B cell (primary cell): ENCODE measurements at regions of chr7 and their contacts with region 1.

Region 1: GRCh38 chr7:876167-876967 is at the start of gene GET4:
- DNase-seq: peak; percentile 98
- ATAC-seq: peak; percentile 78
- H3K4me3 ChIP-seq: peak within 1 kb of the TSS in 4 of 5 experiments; percentile 71 to 97 (median 88)
- H3K4me3 Mint-ChIP-seq: peak within 1 kb of the TSS; percentile 83
- H3K27ac ChIP-seq: peak within 1 kb of the TSS; percentile 80 to 93
- H3K27ac Mint-ChIP-seq: peak within 1 kb of the TSS; percentile 90
- H3K4me1 ChIP-seq: peaks cover 21 to 35% of the 10 kb centered on the region in 2 donors
- H3K4me1 Mint-ChIP-seq: peaks cover 36% of the 10 kb centered on the region
- H3K27me3 ChIP-seq: no peaks in the 10 kb centered on the region
- H3K27me3 Mint-ChIP-seq: no peaks in the 10 kb centered on the region
- CTCF ChIP-seq: no peak
- total RNA-seq, gene GET4: 62.8 and 65.5 TPM in 2 replicates

Region 2: GRCh38 chr7:726084-726853 is 150.1 kb before region 1 on chr7 and contains the start of gene DNAAF5:
- CTCF ChIA-PET with region 1: no interaction called
- POLR2A ChIA-PET with region 1: no interaction called
- intact Hi-C with region 1: loop called (anchors 1 kb)
- DNase-seq: peak; percentile 91
- ATAC-seq: peak; percentile 89
- H3K4me3 ChIP-seq: peak within 1 kb of the TSS; percentile 35 to 87 (median 66)
- H3K4me3 Mint-ChIP-seq: peak within 1 kb of the TSS; percentile 86
- H3K27ac ChIP-seq: peak within 1 kb of the TSS; percentile 29 to 76
- H3K27ac Mint-ChIP-seq: peak within 1 kb of the TSS; percentile 85
- H3K4me1 ChIP-seq: peaks cover 16 to 21% of the 10 kb centered on the region in 2 donors
- H3K4me1 Mint-ChIP-seq: peaks cover 25% of the 10 kb centered on the region
- H3K27me3 ChIP-seq: no peaks in the 10 kb centered on the region
- H3K27me3 Mint-ChIP-seq: no peaks in the 10 kb centered on the region
- CTCF ChIP-seq: no peak
- total RNA-seq, gene DNAAF5: 21.4 and 25.8 TPM in 2 replicates

Region 3: DNA sequence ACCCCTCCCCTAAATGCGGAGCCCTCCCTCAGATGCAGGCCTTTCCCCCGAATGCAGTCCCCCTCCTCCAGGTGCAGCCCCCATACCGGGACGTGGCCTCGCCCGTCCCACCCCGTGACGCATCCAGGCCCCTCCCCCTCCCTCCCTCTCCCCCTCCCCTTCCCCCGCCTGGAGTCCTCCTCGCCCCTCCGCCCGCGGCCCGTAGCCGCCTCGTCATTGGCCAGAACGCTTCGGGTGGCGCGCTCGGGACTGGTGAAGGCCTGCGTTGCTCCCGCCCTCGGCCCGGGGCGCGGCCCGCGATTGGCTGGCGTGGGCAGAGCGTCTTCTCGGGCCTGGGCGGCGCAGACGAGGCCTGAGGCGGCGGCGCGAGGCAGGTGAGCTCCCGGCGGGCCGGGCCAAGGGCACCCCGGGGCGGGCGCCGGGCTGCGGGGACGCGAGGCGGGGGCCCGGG is 60.0 kb before region 1 on chr7:
- CTCF ChIA-PET with region 1: interaction called, 18 read pairs
- POLR2A ChIA-PET with region 1: no interaction called
- intact Hi-C with region 1: no loop called
- DNase-seq: peak; percentile 97
- ATAC-seq: peak; percentile 92
- H3K4me3 ChIP-seq: peak overlapping the region in 4 of 5 experiments; percentile 49 to 71 (median 66)
- H3K4me3 Mint-ChIP-seq: peak overlapping the region; percentile 86
- H3K27ac ChIP-seq: no peak overlapping the region
- H3K27ac Mint-ChIP-seq: peak overlapping the region; percentile 73
- H3K4me1 ChIP-seq: peaks cover 29 to 43% of the 10 kb centered on the region in 2 donors
- H3K4me1 Mint-ChIP-seq: peaks cover 58% of the 10 kb centered on the region
- H3K27me3 ChIP-seq: no peaks in the 10 kb centered on the region
- H3K27me3 Mint-ChIP-seq: no peaks in the 10 kb centered on the region
- CTCF ChIP-seq: no peak

Region 4: GRCh38 chr7:954330-955238 is 78.2 kb after region 1 on chr7 and contains the start of gene ADAP1:
- CTCF ChIA-PET with region 1: no interaction called
- POLR2A ChIA-PET with region 1: no interaction called
- intact Hi-C with region 1: loop called (anchors 2 kb)
- DNase-seq: peak; percentile 76
- ATAC-seq: peak; percentile 71
- H3K4me3 ChIP-seq: peak within 1 kb of the TSS in 3 of 5 experiments; percentile 30 to 61 (median 45)
- H3K4me3 Mint-ChIP-seq: peak within 1 kb of the TSS; percentile 76
- H3K27ac ChIP-seq: no peak within 1 kb of the TSS
- H3K27ac Mint-ChIP-seq: peak within 1 kb of the TSS; percentile 32
- H3K4me1 ChIP-seq: peaks cover 7 to 38% of the 10 kb centered on the region in 2 donors
- H3K4me1 Mint-ChIP-seq: peaks cover 19% of the 10 kb centered on the region
- H3K27me3 ChIP-seq: peaks cover 0 to 21% (median 5%) of the 10 kb centered on the region in 4 experiments
- H3K27me3 Mint-ChIP-seq: peaks cover 3% of the 10 kb centered on the region
- CTCF ChIP-seq: no peak
- total RNA-seq, gene ADAP1: 12.9 and 15.6 TPM in 2 replicates

Region 5: GRCh38 chr7:1144269-1144771 is 268.0 kb after region 1 on chr7:
- CTCF ChIA-PET with region 1: no interaction called
- POLR2A ChIA-PET with region 1: no interaction called
- intact Hi-C with region 1: loop called (anchors 5 kb)
- DNase-seq: peak; percentile 65
- ATAC-seq: peak; percentile 42
- H3K4me3 ChIP-seq: no peak overlapping the region
- H3K4me3 Mint-ChIP-seq: peak overlapping the region; percentile 75
- H3K27ac ChIP-seq: no peak overlapping the region
- H3K27ac Mint-ChIP-seq: peak overlapping the region; percentile 85
- H3K4me1 ChIP-seq: peaks cover 15 to 33% of the 10 kb centered on the region in 2 donors
- H3K4me1 Mint-ChIP-seq: peaks cover 32% of the 10 kb centered on the region
- H3K27me3 ChIP-seq: no peaks in the 10 kb centered on the region
- H3K27me3 Mint-ChIP-seq: no peaks in the 10 kb centered on the region
- CTCF ChIP-seq: peak; percentile 27

Region 6: DNA sequence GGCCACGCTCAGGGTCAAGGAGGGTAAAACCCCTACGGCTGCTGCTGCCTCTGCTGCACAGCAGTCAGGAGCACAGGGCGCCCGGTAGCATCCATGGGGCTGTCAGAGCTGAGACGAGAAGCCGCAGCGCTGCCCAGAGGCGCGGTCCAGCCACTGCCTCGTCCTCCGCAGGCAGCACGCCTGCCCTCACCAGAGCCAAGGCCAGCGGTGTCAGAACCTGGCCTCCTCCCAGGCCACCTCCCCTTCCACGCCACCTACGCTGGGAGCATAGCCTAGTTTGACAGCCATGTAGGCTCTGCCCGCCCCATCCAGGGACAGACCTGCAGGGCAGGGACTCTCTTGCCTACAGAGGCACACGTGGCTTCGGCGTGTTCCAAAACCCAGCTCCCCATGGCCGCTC is 611.6 kb after region 1 on chr7:
- CTCF ChIA-PET with region 1: no interaction called
- POLR2A ChIA-PET with region 1: no interaction called
- intact Hi-C with region 1: no loop called
- DNase-seq: no peak
- ATAC-seq: no peak
- H3K4me3 ChIP-seq: no peak overlapping the region
- H3K4me3 Mint-ChIP-seq: no peak overlapping the region
- H3K27ac ChIP-seq: no peak overlapping the region
- H3K27ac Mint-ChIP-seq: no peak overlapping the region
- H3K4me1 ChIP-seq: no peaks in the 10 kb centered on the region
- H3K4me1 Mint-ChIP-seq: no peaks in the 10 kb centered on the region
- H3K27me3 ChIP-seq: no peaks in the 10 kb centered on the region
- H3K27me3 Mint-ChIP-seq: no peaks in the 10 kb centered on the region
- CTCF ChIP-seq: no peak